Heart right ventricle (tissue), 16 donors: ENCODE measurements at regions of chr7 and their contacts with region 1.

Region 1: GRCh38 chr7:151519765-151520418 is at the start of gene RHEB:
- DNase-seq: peak; percentile 98 to 99
- ATAC-seq: peak; percentile 93 to 97 (median 97)
- H3K4me3 ChIP-seq: peak within 1 kb of the TSS; percentile 69 to 84 (median 76)
- H3K27ac ChIP-seq: peak within 1 kb of the TSS; percentile 87 to 99 (median 98)
- H3K4me1 ChIP-seq: peaks cover 2 to 45% (median 41%) of the 10 kb centered on the region in 9 donors
- H3K27me3 ChIP-seq: no peaks in the 10 kb centered on the region
- CTCF ChIP-seq: peak in 1 of 9 donors; percentile 3
- total RNA-seq, gene RHEB: 87.0 to 166 (median 104) TPM

Region 2: GRCh38 chr7:151410405-151411390 is 109.2 kb before region 1 on chr7:
- intact Hi-C with region 1: no loop called
- DNase-seq: no peak
- ATAC-seq: peak in 6 of 8 donors; percentile 14 to 51 (median 44)
- H3K4me3 ChIP-seq: peak overlapping the region; percentile 31 to 53 (median 48)
- H3K27ac ChIP-seq: peak overlapping the region in 1 of 10 donors; percentile 58
- H3K4me1 ChIP-seq: peaks cover 3 to 26% (median 21%) of the 10 kb centered on the region in 9 donors
- H3K27me3 ChIP-seq: peaks cover 6 to 85% (median 57%) of the 10 kb centered on the region in 7 donors
- CTCF ChIP-seq: no peak

Region 3: GRCh38 chr7:151477867-151478266 is 42.0 kb before region 1 on chr7:
- intact Hi-C with region 1: loop called in 1 of 10 experiments (anchors 5 kb)
- DNase-seq: no peak
- ATAC-seq: no peak
- H3K4me3 ChIP-seq: no peak overlapping the region
- H3K27ac ChIP-seq: no peak overlapping the region
- H3K4me1 ChIP-seq: peaks cover 0 to 16% (median 12%) of the 10 kb centered on the region in 9 donors
- H3K27me3 ChIP-seq: no peaks in the 10 kb centered on the region
- CTCF ChIP-seq: no peak

Region 4: DNA sequence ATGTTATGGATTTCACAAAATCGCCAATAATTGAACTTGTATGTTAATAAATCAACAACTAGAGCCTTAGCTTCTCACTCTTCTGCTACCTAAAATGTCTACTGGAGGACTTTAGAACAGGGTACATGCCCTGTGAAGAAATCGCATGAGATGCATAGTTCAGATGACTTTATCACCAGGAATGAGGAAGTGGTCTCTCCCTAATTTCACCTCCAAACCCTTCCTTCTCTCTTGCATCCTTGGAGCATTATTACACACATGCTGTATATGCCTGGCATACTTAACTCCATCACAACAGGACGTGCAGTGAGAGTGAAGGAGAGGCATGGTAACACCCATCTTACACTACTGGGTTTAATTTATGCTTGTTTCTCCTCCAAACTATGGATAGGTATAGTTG is 28.0 kb before region 1 on chr7:
- intact Hi-C with region 1: loop called in 1 of 10 experiments (anchors 2 kb)
- DNase-seq: no peak
- ATAC-seq: peak in 1 of 8 donors; percentile 34
- H3K4me3 ChIP-seq: no peak overlapping the region
- H3K27ac ChIP-seq: no peak overlapping the region
- H3K4me1 ChIP-seq: peaks cover 7 to 86% (median 61%) of the 10 kb centered on the region in 9 donors
- H3K27me3 ChIP-seq: no peaks in the 10 kb centered on the region
- CTCF ChIP-seq: no peak

Region 5: GRCh38 chr7:151579644-151580043 is 59.8 kb after region 1 on chr7:
- intact Hi-C with region 1: no loop called
- DNase-seq: no peak
- ATAC-seq: no peak
- H3K4me3 ChIP-seq: no peak overlapping the region
- H3K27ac ChIP-seq: no peak overlapping the region
- H3K4me1 ChIP-seq: no peaks in the 10 kb centered on the region
- H3K27me3 ChIP-seq: no peaks in the 10 kb centered on the region
- CTCF ChIP-seq: no peak